GM12878 (cell line): ENCODE measurements at regions of chr7 and their contacts with region 1.

Region 1: GRCh38 chr7:7977774-7978173 is 9.2 kb downstream of the GLCCI1 start:
- DNase-seq: no peak
- ATAC-seq: peak; percentile 4
- H3K4me3 ChIP-seq: peak overlapping the region; percentile 47; the same call in 1 of the 2 replicates
- H3K27ac ChIP-seq: peak overlapping the region; percentile 30; the same call in 1 of the 2 replicates
- H3K4me1 ChIP-seq: peaks cover 4% of the 10 kb centered on the region; the same call in 1 of the 2 replicates
- H3K27me3 ChIP-seq: no peaks in the 10 kb centered on the region
- CTCF ChIP-seq: no peak
- EP300 ChIP-seq: no peak
- POLR2A ChIP-seq: no peak
- RAD21 ChIP-seq: no peak

Region 2: DNA sequence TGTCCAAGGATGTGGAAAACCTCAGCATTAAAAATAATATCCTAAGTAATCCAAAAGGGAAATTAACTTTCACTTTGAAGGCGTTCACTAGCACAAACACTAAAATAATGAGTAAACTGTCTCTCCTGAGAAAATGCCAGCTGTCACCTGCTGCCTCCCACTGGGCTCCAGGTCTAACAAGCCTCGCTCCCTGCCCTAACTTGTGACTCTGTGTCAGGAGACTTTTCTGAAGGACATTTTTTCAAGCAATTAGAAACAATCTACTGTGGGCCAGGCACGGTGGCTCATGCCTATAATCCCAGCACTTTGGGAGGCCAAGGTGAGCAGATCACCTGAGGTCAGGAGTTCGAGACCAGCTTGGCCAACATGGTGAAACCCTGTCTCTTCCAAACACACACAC is 82.0 kb before region 1 on chr7:
- CTCF ChIA-PET with region 1: no interaction called
- POLR2A ChIA-PET with region 1: no interaction called
- RAD21 ChIA-PET with region 1: no interaction called
- SMC1A ChIA-PET with region 1: no interaction called
- in situ Hi-C with region 1: no loop called
- intact Hi-C with region 1: no loop called
- DNase-seq: no peak
- ATAC-seq: no peak
- H3K4me3 ChIP-seq: no peak overlapping the region
- H3K27ac ChIP-seq: no peak overlapping the region
- H3K4me1 ChIP-seq: no peaks in the 10 kb centered on the region
- H3K27me3 ChIP-seq: no peaks in the 10 kb centered on the region
- CTCF ChIP-seq: no peak
- EP300 ChIP-seq: no peak
- POLR2A ChIP-seq: no peak
- RAD21 ChIP-seq: no peak

Region 3: DNA sequence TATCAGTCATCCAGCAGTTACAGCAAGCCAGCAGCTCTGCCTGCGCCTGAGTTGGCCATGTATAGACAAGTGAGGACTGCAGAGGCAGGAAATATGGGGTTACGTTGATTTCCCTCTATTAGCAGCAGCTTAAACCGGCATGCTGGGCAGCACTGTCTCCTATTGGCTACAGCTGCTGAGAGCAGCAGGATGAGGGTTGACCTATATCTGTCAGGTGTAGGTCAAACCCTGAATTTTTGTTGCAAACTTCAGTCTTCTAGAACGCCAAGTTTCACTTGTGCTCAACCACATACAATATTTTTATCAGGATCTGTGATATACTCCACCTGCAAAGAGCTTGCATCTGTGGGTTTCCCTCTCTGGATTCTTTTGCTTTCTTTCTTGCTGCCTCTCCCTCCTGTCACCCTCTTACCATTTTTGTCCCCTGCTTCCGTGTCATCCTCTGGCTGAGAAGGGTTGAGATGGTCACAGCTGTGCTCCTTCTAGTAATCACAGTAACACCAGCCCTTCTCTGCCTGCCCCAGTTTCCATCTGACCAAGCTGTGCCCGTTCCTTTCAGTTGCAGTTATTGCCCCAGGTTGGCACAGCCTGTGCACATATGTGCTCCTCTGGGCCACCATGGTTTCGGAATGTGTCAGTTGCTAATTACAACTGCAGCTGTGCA is 33.0 kb before region 1 on chr7:
- CTCF ChIA-PET with region 1: interaction called, 4 read pairs
- POLR2A ChIA-PET with region 1: interaction called, 3 read pairs
- RAD21 ChIA-PET with region 1: interaction called, 12 read pairs
- SMC1A ChIA-PET with region 1: interaction called, 18 read pairs
- in situ Hi-C with region 1: no loop called
- intact Hi-C with region 1: no loop called
- DNase-seq: peak; percentile 99
- ATAC-seq: peak; percentile 95
- H3K4me3 ChIP-seq: peak overlapping the region; percentile 52
- H3K27ac ChIP-seq: peak overlapping the region; percentile 78
- H3K4me1 ChIP-seq: peaks cover 15% of the 10 kb centered on the region
- H3K27me3 ChIP-seq: no peaks in the 10 kb centered on the region
- CTCF ChIP-seq: 0 out of 6 replicates have a peak, but pooled peaks of 1 of the 3 experiments have one; percentile 7
- EP300 ChIP-seq: peak; percentile 78 to 85
- POLR2A ChIP-seq: peak; percentile 54
- RAD21 ChIP-seq: peak; percentile 46

Region 4: GRCh38 chr7:7989133-7989984 is 11.6 kb after region 1 on chr7:
- CTCF ChIA-PET with region 1: interaction called, 6 read pairs
- POLR2A ChIA-PET with region 1: no interaction called
- RAD21 ChIA-PET with region 1: interaction called, 6 read pairs
- SMC1A ChIA-PET with region 1: interaction called, 17 read pairs
- in situ Hi-C with region 1: no loop called
- intact Hi-C with region 1: no loop called
- DNase-seq: no peak
- ATAC-seq: no peak; the same call in 1 of the 3 replicates
- H3K4me3 ChIP-seq: no peak overlapping the region
- H3K27ac ChIP-seq: no peak overlapping the region
- H3K4me1 ChIP-seq: peaks cover 6% of the 10 kb centered on the region; the same call in 1 of the 2 replicates
- H3K27me3 ChIP-seq: no peaks in the 10 kb centered on the region
- CTCF ChIP-seq: no peak
- EP300 ChIP-seq: no peak
- POLR2A ChIP-seq: no peak
- RAD21 ChIP-seq: no peak

Region 5: DNA sequence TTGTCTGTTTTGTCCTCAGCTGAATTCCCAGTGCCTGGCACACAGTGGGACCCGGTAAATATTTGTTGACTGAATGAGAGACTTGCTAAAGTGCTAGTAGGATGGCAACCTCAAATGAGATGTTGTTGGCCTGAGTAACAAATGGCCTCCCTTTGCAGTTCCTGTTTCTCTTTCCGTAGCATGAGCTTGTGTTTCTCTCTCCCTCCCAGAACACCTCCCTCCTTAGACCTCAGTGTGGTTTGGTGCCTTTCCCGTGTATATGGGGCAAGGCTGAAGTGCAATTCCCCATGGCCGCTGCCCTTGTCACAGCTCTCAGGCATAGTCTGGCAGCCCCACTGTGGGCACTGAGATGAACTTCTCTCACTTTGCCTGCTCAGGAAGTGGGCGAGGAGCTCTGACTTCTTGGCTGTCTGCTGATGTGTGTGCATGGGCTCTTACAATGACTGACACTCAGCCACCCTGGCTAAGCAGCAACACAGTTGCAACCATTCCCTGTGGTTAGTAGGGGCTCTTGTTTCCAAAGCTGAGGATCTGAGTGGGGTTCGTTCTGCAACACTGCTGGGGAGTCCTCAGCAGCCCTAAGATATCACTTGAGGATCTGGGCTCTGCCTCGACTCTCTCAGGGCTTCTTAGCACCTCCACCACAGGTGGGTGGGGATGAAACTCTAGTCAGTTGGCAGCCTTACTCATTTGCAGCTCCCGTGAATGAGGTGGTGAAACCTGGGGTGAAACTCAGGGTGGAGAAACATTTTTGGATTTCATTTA is 148.1 kb after region 1 on chr7:
- CTCF ChIA-PET with region 1: interaction called, 6 read pairs
- POLR2A ChIA-PET with region 1: interaction called, 6 read pairs
- RAD21 ChIA-PET with region 1: interaction called, 56 read pairs
- SMC1A ChIA-PET with region 1: interaction called, 29 read pairs
- in situ Hi-C with region 1: no loop called
- intact Hi-C with region 1: no loop called
- DNase-seq: peak; percentile 95
- ATAC-seq: peak; percentile 80
- H3K4me3 ChIP-seq: no peak overlapping the region; the same call in 1 of the 2 replicates
- H3K27ac ChIP-seq: peak overlapping the region; percentile 90
- H3K4me1 ChIP-seq: peaks cover 68% of the 10 kb centered on the region
- H3K27me3 ChIP-seq: no peaks in the 10 kb centered on the region
- CTCF ChIP-seq: no peak
- EP300 ChIP-seq: peak; percentile 66 to 81
- POLR2A ChIP-seq: peak; percentile 74
- RAD21 ChIP-seq: peak; percentile 25